GM12878 (cell line): ENCODE measurements at regions of chrX and their contacts with region 1.

Region 1: GRCh38 chrX:64394874-64395567 is at the start of gene MTMR8:
- DNase-seq: peak; percentile 23
- ATAC-seq: peak; percentile 97
- H3K4me3 ChIP-seq: peak within 1 kb of the TSS; percentile 67
- H3K27ac ChIP-seq: no peak within 1 kb of the TSS; the same call in 1 of the 2 replicates
- H3K4me1 ChIP-seq: no peaks in the 10 kb centered on the region
- H3K27me3 ChIP-seq: no peaks in the 10 kb centered on the region
- CTCF ChIP-seq: no peak
- EP300 ChIP-seq: no peak
- POLR2A ChIP-seq: peak; percentile 49; the same call in 1 of the 2 replicates
- RAD21 ChIP-seq: no peak
- polyA plus RNA-seq, gene MTMR8: 4.6 to 4.7 TPM

Region 2: GRCh38 chrX:64169988-64170387 is 225.0 kb before region 1 on chrX:
- CTCF ChIA-PET with region 1: no interaction called
- POLR2A ChIA-PET with region 1: no interaction called
- RAD21 ChIA-PET with region 1: no interaction called
- SMC1A ChIA-PET with region 1: no interaction called
- in situ Hi-C with region 1: no loop called
- intact Hi-C with region 1: no loop called
- DNase-seq: no peak
- ATAC-seq: peak; percentile 65
- H3K4me3 ChIP-seq: no peak overlapping the region
- H3K27ac ChIP-seq: no peak overlapping the region
- H3K4me1 ChIP-seq: no peaks in the 10 kb centered on the region
- H3K27me3 ChIP-seq: no peaks in the 10 kb centered on the region
- CTCF ChIP-seq: no peak
- EP300 ChIP-seq: no peak
- POLR2A ChIP-seq: no peak
- RAD21 ChIP-seq: no peak

Region 3: GRCh38 chrX:64205735-64206491 is 189.1 kb before region 1 on chrX:
- CTCF ChIA-PET with region 1: no interaction called
- POLR2A ChIA-PET with region 1: no interaction called
- RAD21 ChIA-PET with region 1: no interaction called
- SMC1A ChIA-PET with region 1: no interaction called
- in situ Hi-C with region 1: loop called (anchors 10 kb)
- intact Hi-C with region 1: loop called (anchors 2 kb)
- DNase-seq: peak; percentile 71
- ATAC-seq: peak; percentile 89
- H3K4me3 ChIP-seq: peak overlapping the region; percentile 62
- H3K27ac ChIP-seq: peak overlapping the region; percentile 84
- H3K4me1 ChIP-seq: no peaks in the 10 kb centered on the region; the same call in 1 of the 2 replicates
- H3K27me3 ChIP-seq: no peaks in the 10 kb centered on the region
- CTCF ChIP-seq: no peak
- EP300 ChIP-seq: no peak
- POLR2A ChIP-seq: peak; percentile 92
- RAD21 ChIP-seq: no peak

Region 4: GRCh38 chrX:64338296-64338695 is 56.7 kb before region 1 on chrX:
- CTCF ChIA-PET with region 1: no interaction called
- POLR2A ChIA-PET with region 1: no interaction called
- RAD21 ChIA-PET with region 1: no interaction called
- SMC1A ChIA-PET with region 1: no interaction called
- in situ Hi-C with region 1: loop called (anchors 10 kb)
- intact Hi-C with region 1: no loop called
- DNase-seq: no peak
- ATAC-seq: no peak
- H3K4me3 ChIP-seq: no peak overlapping the region
- H3K27ac ChIP-seq: no peak overlapping the region
- H3K4me1 ChIP-seq: no peaks in the 10 kb centered on the region
- H3K27me3 ChIP-seq: no peaks in the 10 kb centered on the region
- CTCF ChIP-seq: no peak
- EP300 ChIP-seq: no peak
- POLR2A ChIP-seq: no peak
- RAD21 ChIP-seq: no peak

Region 5: DNA sequence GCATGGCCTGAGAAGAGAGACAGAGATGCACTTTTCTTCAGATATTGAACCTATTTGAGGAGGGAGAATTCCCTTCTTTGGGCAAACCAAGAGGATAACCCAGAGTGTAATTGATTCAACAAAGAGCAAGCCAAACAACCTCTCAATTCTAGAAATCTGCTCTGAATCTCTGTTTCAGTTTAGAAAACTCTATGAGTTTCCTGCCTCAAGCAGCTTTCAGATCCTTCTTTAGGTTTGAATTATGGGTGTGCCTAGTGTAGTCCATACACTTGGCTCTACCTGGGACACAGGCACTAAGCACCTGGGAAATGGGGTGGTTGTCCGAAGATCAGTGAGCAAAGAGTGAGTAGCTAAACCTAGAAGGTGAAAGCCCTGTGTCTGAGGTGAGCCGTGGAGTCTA is 52.2 kb after region 1 on chrX:
- CTCF ChIA-PET with region 1: no interaction called
- POLR2A ChIA-PET with region 1: no interaction called
- RAD21 ChIA-PET with region 1: no interaction called
- SMC1A ChIA-PET with region 1: no interaction called
- in situ Hi-C with region 1: no loop called
- intact Hi-C with region 1: no loop called
- DNase-seq: no peak
- ATAC-seq: no peak
- H3K4me3 ChIP-seq: no peak overlapping the region
- H3K27ac ChIP-seq: no peak overlapping the region
- H3K4me1 ChIP-seq: no peaks in the 10 kb centered on the region
- H3K27me3 ChIP-seq: no peaks in the 10 kb centered on the region
- CTCF ChIP-seq: no peak
- EP300 ChIP-seq: no peak
- POLR2A ChIP-seq: no peak
- RAD21 ChIP-seq: no peak

Region 6: GRCh38 chrX:64536736-64537135 is 141.7 kb after region 1 on chrX:
- CTCF ChIA-PET with region 1: no interaction called
- POLR2A ChIA-PET with region 1: no interaction called
- RAD21 ChIA-PET with region 1: no interaction called
- SMC1A ChIA-PET with region 1: no interaction called
- in situ Hi-C with region 1: no loop called
- intact Hi-C with region 1: no loop called
- DNase-seq: no peak
- ATAC-seq: no peak
- H3K4me3 ChIP-seq: no peak overlapping the region
- H3K27ac ChIP-seq: no peak overlapping the region
- H3K4me1 ChIP-seq: no peaks in the 10 kb centered on the region
- H3K27me3 ChIP-seq: no peaks in the 10 kb centered on the region
- CTCF ChIP-seq: no peak
- EP300 ChIP-seq: no peak
- POLR2A ChIP-seq: no peak
- RAD21 ChIP-seq: no peak